MCF 10A (cell line): ENCODE measurements at regions of chr14 and their contacts with region 1.

Region 1: GRCh38 chr14:103500148-103500990 is 22.3 kb downstream of the CKB start:
- DNase-seq: peak; percentile 81
- H3K4me3 Mint-ChIP-seq: no peak overlapping the region
- H3K27ac Mint-ChIP-seq: peak overlapping the region; percentile 51
- H3K4me1 Mint-ChIP-seq: peaks cover 8% of the 10 kb centered on the region
- H3K27me3 Mint-ChIP-seq: no peaks in the 10 kb centered on the region
- CTCF ChIP-seq: peak; percentile 81

Region 2: DNA sequence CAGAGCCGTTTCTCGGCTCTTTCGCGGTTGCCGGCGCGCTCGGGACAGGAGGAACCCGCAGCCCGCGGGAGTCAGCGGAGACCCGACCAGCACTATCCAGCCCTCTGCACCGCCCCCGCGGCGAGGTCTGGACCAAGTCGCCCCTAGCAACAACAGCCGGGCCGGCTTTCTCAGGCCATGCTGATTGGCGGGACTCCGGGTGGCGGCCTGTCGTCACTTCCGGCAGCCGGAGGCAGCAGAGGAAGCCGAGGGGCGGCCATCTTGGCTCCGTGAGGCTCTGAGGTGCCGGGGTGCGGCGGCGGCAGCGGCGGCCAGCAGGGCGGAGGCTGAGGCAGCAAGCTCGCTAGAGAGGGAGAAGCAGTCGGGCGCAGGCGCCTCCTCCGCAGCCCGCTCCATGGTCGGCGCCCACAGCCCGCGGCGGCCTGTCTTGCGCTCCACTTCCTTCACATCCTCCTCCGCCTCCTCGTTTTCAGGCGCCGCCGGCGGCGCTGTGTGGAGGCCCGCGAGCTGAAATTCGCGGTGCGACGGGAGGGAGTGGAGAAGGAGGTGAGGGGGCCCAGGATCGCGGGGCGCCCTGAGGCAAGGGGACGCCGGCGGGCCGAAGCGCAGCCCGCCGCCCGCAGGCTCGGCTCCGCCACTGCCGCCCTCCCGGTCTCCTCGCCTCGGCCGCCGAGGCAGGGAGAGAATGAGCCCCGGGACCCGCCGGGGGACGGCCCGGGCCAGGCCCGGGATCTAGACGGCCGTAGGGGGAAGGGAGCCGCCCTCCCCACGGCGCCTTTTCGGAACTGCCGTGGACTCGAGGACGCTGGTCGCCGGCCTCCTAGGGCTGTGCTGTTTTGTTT is 115.0 kb before region 1 on chr14 and contains the start of gene MARK3:
- CTCF ChIA-PET with region 1: no interaction called
- POLR2A ChIA-PET with region 1: no interaction called
- intact Hi-C with region 1: no loop called
- DNase-seq: peak; percentile 95
- H3K4me3 Mint-ChIP-seq: peak within 1 kb of the TSS; percentile 91
- H3K27ac Mint-ChIP-seq: peak within 1 kb of the TSS; percentile 87
- H3K4me1 Mint-ChIP-seq: peaks cover 24% of the 10 kb centered on the region
- H3K27me3 Mint-ChIP-seq: no peaks in the 10 kb centered on the region
- CTCF ChIP-seq: no peak
- total RNA-seq, gene MARK3: 102 and 130 TPM in 2 replicates

Region 3: GRCh38 chr14:103512701-103513611 is 12.6 kb after region 1 on chr14:
- CTCF ChIA-PET with region 1: interaction called, 18 read pairs
- POLR2A ChIA-PET with region 1: interaction called, 7 read pairs
- intact Hi-C with region 1: no loop called
- DNase-seq: peak; percentile 89
- H3K4me3 Mint-ChIP-seq: peak overlapping the region; percentile 55
- H3K27ac Mint-ChIP-seq: peak overlapping the region; percentile 84
- H3K4me1 Mint-ChIP-seq: peaks cover 19% of the 10 kb centered on the region
- H3K27me3 Mint-ChIP-seq: no peaks in the 10 kb centered on the region
- CTCF ChIP-seq: no peak

Region 4: DNA sequence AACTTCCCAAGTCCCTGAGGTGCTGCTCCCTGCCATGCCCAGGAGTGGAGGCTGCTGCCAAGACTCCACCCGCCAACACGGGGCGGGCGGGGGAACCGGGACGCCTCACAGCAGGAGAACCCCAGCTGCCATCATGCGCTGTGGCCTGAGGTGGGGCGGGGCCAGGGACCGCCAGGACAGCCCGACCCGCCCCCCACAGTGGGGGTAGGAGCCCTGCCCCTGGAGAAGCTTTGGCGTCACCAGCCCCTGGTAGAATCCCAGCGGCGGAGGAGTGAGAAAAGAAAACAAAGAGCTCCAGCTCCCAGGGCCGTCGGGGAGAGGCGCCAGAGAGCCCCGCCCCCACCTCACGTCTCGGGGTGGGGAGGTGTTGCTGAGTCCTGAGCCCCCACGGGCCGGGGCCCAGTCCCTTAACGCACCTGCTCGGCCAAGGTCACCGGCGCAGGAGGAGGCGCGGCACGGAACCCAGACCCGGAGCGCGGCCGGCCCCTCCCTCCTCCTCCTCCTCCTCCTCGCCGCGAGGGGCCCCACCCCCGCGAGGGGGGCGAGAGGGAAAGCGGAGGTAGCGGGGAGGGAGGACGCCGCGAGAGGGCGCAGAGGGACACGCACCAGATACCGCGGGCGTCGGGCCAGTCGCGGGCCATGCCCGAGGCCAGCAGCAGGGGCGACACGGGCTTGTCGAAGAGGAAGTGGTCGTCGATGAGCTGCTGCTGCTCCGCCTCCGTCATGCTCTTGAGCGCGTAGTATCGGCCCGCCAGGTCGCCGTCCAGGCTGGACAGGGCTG is 20.5 kb after region 1 on chr14:
- CTCF ChIA-PET with region 1: interaction called, 18 read pairs
- POLR2A ChIA-PET with region 1: interaction called, 3 read pairs
- intact Hi-C with region 1: no loop called
- DNase-seq: peak; percentile 80
- H3K4me3 Mint-ChIP-seq: peak overlapping the region; percentile 70
- H3K27ac Mint-ChIP-seq: peak overlapping the region; percentile 27
- H3K4me1 Mint-ChIP-seq: peaks cover 14% of the 10 kb centered on the region
- H3K27me3 Mint-ChIP-seq: no peaks in the 10 kb centered on the region
- CTCF ChIP-seq: peak; percentile 39